Right cardiac atrium (tissue), 5 donors: ENCODE measurements at regions of chr3 and their contacts with region 1.

Region 1: DNA sequence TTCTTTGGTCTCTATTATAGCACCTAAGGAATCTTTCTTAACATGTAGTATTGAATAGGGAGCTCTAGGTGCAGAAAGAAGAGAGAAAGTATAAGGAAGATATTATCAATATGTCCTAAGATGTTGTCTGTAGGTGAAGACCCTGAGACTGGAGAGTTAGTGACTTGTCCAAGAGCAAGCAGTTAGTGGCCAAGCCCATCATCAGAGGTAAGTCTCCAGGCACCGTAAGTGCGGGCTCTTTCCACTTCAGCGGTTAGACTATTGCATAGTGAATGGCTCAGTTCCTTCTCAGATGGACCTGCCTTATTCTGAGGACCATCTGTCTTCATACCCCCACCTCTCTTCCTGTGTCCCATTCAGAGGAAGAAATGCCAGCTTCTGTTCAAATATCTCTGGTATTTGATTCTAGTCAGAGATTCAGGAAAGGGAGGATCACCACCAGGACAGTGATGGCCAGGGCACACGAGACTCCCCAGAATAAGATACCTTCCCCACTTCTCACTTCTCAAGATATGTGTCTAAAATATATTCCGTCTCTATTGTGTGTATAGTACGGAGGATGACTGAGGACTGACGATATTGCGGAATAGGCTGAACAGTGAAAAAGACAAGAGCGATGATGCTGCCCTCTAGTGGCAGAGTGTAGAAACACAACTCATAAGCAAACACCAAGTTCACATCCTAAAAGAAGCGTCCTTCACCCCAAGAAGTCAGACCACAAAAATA is 19.1 kb upstream of the ADGRG7 start:
- DNase-seq: peak in 1 of 3 donors; percentile 24
- ATAC-seq: peak; percentile 77 to 79
- H3K4me3 ChIP-seq: no peak overlapping the region
- H3K27ac ChIP-seq: no peak overlapping the region
- H3K4me1 ChIP-seq: no peaks in the 10 kb centered on the region
- H3K27me3 ChIP-seq: no peaks in the 10 kb centered on the region

Region 2: GRCh38 chr3:100316641-100317069 is 273.6 kb before region 1 on chr3:
- intact Hi-C with region 1: loop called in 3 of 4 experiments (anchors 5 to 10 kb)
- DNase-seq: peak; percentile 31 to 69 (median 67)
- ATAC-seq: peak; percentile 79 to 84
- H3K4me3 ChIP-seq: no peak overlapping the region
- H3K27ac ChIP-seq: no peak overlapping the region
- H3K4me1 ChIP-seq: no peaks in the 10 kb centered on the region
- H3K27me3 ChIP-seq: no peaks in the 10 kb centered on the region

Region 3: GRCh38 chr3:100425316-100425715 is 165.0 kb before region 1 on chr3:
- intact Hi-C with region 1: no loop called
- DNase-seq: no peak
- ATAC-seq: peak in 1 of 2 donors; percentile 29
- H3K4me3 ChIP-seq: no peak overlapping the region
- H3K27ac ChIP-seq: no peak overlapping the region
- H3K4me1 ChIP-seq: peaks cover 5% of the 10 kb centered on the region
- H3K27me3 ChIP-seq: no peaks in the 10 kb centered on the region

Region 4: GRCh38 chr3:100463002-100463401 is 127.3 kb before region 1 on chr3:
- intact Hi-C with region 1: loop called (anchors 1 to 5 kb)
- DNase-seq: no peak
- ATAC-seq: peak; percentile 87 to 88
- H3K4me3 ChIP-seq: no peak overlapping the region
- H3K27ac ChIP-seq: no peak overlapping the region
- H3K4me1 ChIP-seq: no peaks in the 10 kb centered on the region
- H3K27me3 ChIP-seq: no peaks in the 10 kb centered on the region